ENCODE measurements at regions of chr10 and their contacts with region 1.

Region 1: DNA sequence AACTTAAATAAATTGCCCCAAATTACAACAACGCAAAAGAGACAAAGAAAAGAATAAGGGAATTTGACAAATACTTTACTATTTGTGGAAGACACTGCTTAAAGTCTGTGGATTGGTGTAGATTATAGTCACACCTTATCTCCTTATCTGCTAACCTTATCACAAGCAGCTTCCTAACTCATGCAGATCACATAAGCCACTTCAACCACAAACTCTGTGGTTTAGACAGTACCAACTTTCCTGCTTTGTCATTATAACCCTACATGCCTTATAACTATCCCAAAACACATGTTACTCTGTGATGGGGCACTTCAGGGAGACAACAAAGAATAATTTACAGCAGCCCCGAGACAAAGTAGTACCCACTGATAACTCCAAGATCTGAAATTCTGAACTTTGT is 41.5 kb upstream of the PPP3CB start:
- DNase-seq: no peak
- ATAC-seq: no peak
- H3K4me3 ChIP-seq: no peak overlapping the region
- H3K27ac ChIP-seq: peak overlapping the region; percentile 7
- H3K4me1 ChIP-seq: peaks cover 20% of the 10 kb centered on the region
- H3K27me3 ChIP-seq: no peaks in the 10 kb centered on the region
- CTCF ChIP-seq: no peak

Region 2: GRCh38 chr10:73723516-73723915 is 186.2 kb after region 1 on chr10:
- intact Hi-C with region 1: loop called in 1 of 2 experiments (anchors 10 kb)
- DNase-seq: no peak
- ATAC-seq: no peak
- H3K4me3 ChIP-seq: no peak overlapping the region
- H3K27ac ChIP-seq: no peak overlapping the region
- H3K4me1 ChIP-seq: peaks cover 6% of the 10 kb centered on the region
- H3K27me3 ChIP-seq: no peaks in the 10 kb centered on the region
- CTCF ChIP-seq: no peak

Region 3: DNA sequence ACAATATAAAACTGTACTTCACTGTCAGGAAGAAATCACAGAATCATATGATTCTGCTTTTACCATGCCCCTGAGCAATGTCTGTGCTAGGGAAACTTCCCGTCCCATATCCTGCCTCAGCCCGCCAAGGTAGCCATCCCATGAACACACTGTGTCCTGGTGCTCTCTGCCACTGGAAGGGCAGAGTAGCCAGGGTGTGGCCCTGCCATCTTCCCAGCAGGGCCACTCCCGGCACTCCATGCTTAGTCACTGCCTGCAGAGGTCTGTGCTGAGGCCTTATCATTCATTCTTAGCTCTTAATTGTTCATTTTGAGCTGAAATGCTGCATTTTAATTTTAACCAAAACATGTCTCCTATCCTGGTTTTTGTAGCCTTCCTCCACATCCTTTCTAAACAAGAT is 581.5 kb after region 1 on chr10:
- intact Hi-C with region 1: loop called in 1 of 2 experiments (anchors 5 kb)
- DNase-seq: no peak
- ATAC-seq: peak in 3 of 4 donors; percentile 36 to 61 (median 36)
- H3K4me3 ChIP-seq: no peak overlapping the region
- H3K27ac ChIP-seq: peak overlapping the region; percentile 23
- H3K4me1 ChIP-seq: no peaks in the 10 kb centered on the region
- H3K27me3 ChIP-seq: no peaks in the 10 kb centered on the region
- CTCF ChIP-seq: no peak

Measured in psoas muscle (tissue), 8 donors.